ENCODE measurements at regions of chr11 and their contacts with region 1.

Region 1: GRCh38 chr11:117946842-117947526 is 17.8 kb upstream of the TMPRSS13 start:
- DNase-seq: peak; percentile 85
- H3K4me3 ChIP-seq: no peak overlapping the region
- H3K27ac ChIP-seq: no peak overlapping the region
- H3K27me3 ChIP-seq: peaks cover 21% of the 10 kb centered on the region
- CTCF ChIP-seq: peak; percentile 97

Region 2: GRCh38 chr11:117799634-117800033 is 147.3 kb before region 1 on chr11:
- CTCF ChIA-PET with region 1: interaction called, 207 read pairs
- POLR2A ChIA-PET with region 1: no interaction called
- DNase-seq: no peak
- H3K4me3 ChIP-seq: no peak overlapping the region
- H3K27ac ChIP-seq: no peak overlapping the region
- H3K27me3 ChIP-seq: peaks cover 40% of the 10 kb centered on the region
- CTCF ChIP-seq: no peak

Region 3: GRCh38 chr11:117817368-117818040 is 129.5 kb before region 1 on chr11:
- CTCF ChIA-PET with region 1: interaction called, 197 read pairs
- POLR2A ChIA-PET with region 1: no interaction called
- DNase-seq: peak; percentile 51
- H3K4me3 ChIP-seq: no peak overlapping the region
- H3K27ac ChIP-seq: no peak overlapping the region
- H3K27me3 ChIP-seq: no peaks in the 10 kb centered on the region
- CTCF ChIP-seq: peak; percentile 100

Region 4: GRCh38 chr11:117843666-117844484 is 103.1 kb before region 1 on chr11:
- CTCF ChIA-PET with region 1: interaction called, 256 read pairs
- POLR2A ChIA-PET with region 1: no interaction called
- DNase-seq: peak; percentile 20
- H3K4me3 ChIP-seq: no peak overlapping the region
- H3K27ac ChIP-seq: no peak overlapping the region
- H3K27me3 ChIP-seq: peaks cover 7% of the 10 kb centered on the region
- CTCF ChIP-seq: peak; percentile 98

Region 5: GRCh38 chr11:117885777-117886176 is 61.2 kb before region 1 on chr11:
- CTCF ChIA-PET with region 1: interaction called, 11 read pairs
- POLR2A ChIA-PET with region 1: no interaction called
- DNase-seq: no peak
- H3K4me3 ChIP-seq: peak overlapping the region; percentile 23; the same call in 1 of the 2 replicates
- H3K27ac ChIP-seq: peak overlapping the region; percentile 75
- H3K27me3 ChIP-seq: no peaks in the 10 kb centered on the region
- CTCF ChIP-seq: no peak

Region 6: GRCh38 chr11:117932067-117932370 is 15.0 kb before region 1 on chr11:
- CTCF ChIA-PET with region 1: interaction called, 41 read pairs
- POLR2A ChIA-PET with region 1: no interaction called
- DNase-seq: no peak
- H3K4me3 ChIP-seq: no peak overlapping the region
- H3K27ac ChIP-seq: no peak overlapping the region
- H3K27me3 ChIP-seq: peaks cover 26% of the 10 kb centered on the region
- CTCF ChIP-seq: no peak

Region 7: DNA sequence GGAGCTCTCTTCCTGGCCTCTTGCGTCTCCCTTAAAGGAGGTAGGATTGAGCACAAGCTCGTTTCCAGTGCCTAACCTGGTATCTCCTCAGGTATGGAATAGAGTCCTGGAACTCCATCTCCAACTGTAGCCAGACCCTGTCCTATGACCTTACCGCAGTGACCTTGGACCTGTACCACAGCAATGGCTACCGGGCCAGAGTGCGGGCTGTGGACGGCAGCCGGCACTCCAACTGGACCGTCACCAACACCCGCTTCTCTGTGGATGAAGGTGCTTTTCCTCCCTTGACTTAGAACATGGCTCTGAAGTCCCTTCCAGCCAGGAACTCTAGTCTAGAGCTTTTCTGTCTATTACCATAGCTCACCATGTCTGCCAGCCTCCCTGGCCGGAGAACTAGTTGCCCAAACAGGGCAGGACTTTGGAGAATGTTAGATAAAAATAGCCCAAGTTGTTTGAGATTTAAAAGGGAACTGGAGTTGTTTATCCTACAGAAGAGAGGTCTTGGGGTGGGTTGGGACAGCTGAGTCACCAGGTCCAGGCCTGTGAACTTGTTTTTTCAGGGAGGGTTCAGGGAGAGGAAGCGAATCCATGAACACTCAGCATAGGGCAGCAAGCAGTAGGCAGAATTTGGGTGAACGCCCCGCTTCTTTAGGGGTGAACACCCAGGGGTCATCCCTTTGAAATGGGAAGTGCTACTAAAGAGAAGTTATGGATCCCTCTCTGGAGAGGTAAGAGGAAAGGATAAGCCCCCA is 42.5 kb after region 1 on chr11:
- CTCF ChIA-PET with region 1: no interaction called
- POLR2A ChIA-PET with region 1: no interaction called
- DNase-seq: no peak
- H3K4me3 ChIP-seq: no peak overlapping the region
- H3K27ac ChIP-seq: no peak overlapping the region
- H3K27me3 ChIP-seq: peaks cover 21% of the 10 kb centered on the region
- CTCF ChIP-seq: no peak

Region 8: GRCh38 chr11:118084247-118084646 is 137.3 kb after region 1 on chr11:
- CTCF ChIA-PET with region 1: no interaction called
- POLR2A ChIA-PET with region 1: no interaction called
- DNase-seq: no peak
- H3K4me3 ChIP-seq: no peak overlapping the region
- H3K27ac ChIP-seq: no peak overlapping the region
- H3K27me3 ChIP-seq: no peaks in the 10 kb centered on the region
- CTCF ChIP-seq: no peak

Region 9: DNA sequence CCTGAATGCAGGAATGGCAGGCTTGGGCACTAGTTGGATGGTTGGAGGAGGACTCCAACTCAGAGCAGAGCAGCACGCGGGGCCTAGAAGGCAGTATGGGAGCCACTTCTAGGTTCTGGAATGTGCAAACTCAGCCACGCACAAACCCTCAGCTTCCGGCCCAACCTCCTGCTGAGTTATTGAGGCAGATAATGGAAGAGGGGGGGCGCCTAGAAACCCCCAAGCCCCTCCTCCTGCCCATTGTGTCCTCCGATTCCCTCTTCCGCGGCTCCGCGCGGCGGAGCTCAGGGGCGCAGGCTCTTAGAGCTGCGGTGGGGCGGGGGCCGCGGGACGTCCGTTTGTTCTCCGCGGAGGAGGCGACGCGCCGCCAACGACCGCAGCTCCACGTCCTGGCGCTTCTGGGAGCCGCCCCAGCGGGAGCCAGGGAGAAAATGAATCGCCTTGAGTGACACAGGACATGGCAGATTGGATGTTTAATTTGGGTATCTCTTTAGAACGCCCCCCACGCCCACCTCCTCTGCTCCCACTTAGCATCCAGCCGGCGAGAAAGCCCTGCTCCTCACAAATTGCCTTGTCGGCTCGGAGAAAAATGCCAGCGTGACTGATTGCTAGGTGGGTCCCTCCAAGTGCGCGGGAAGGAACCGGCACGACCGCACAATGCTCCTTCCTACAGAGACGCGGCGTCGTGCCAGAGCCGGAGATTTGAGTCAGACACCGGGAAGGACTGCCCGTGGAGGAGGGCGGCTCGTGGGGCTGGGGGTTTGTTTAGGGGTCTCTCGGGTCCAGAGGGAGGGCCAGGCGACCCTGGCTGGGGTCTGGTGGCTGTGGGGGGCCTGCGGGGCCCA is 1637.4 kb after region 1 on chr11:
- CTCF ChIA-PET with region 1: no interaction called
- POLR2A ChIA-PET with region 1: no interaction called
- DNase-seq: peak; percentile 18
- H3K4me3 ChIP-seq: peak overlapping the region; percentile 64
- H3K27ac ChIP-seq: no peak overlapping the region
- H3K27me3 ChIP-seq: peaks cover 28% of the 10 kb centered on the region
- CTCF ChIP-seq: no peak

Measured in AG04450 (cell line).